ENCODE measurements at regions of chr7 and their contacts with region 1.

Region 1: GRCh38 chr7:158829342-158830210 is at the start of gene ESYT2:
- DNase-seq: peak; percentile 98 to 100 (median 100)
- H3K4me3 ChIP-seq: peak within 1 kb of the TSS; percentile 95
- H3K27ac ChIP-seq: peak within 1 kb of the TSS; percentile 97 to 98
- H3K4me1 ChIP-seq: peaks cover 6% of the 10 kb centered on the region
- H3K27me3 ChIP-seq: no peaks in the 10 kb centered on the region
- CTCF ChIP-seq: peak in 2 of 3 donors; percentile 23 to 37
- EP300 ChIP-seq: peak; percentile 54
- POLR2A ChIP-seq: peak; percentile 99
- total RNA-seq, gene ESYT2: 72.8 to 147 (median 95.9) TPM

Region 2: GRCh38 chr7:158689488-158689887 is 140.1 kb before region 1 on chr7:
- intact Hi-C with region 1: no loop called
- DNase-seq: no peak
- H3K4me3 ChIP-seq: no peak overlapping the region
- H3K27ac ChIP-seq: no peak overlapping the region
- H3K4me1 ChIP-seq: no peaks in the 10 kb centered on the region
- H3K27me3 ChIP-seq: no peaks in the 10 kb centered on the region
- CTCF ChIP-seq: no peak
- EP300 ChIP-seq: no peak
- POLR2A ChIP-seq: no peak

Region 3: GRCh38 chr7:158784270-158784669 is 45.3 kb before region 1 on chr7:
- intact Hi-C with region 1: loop called in 1 of 4 experiments (anchors 2 kb)
- DNase-seq: peak in 2 of 5 donors; percentile 35 to 51
- H3K4me3 ChIP-seq: no peak overlapping the region
- H3K27ac ChIP-seq: peak overlapping the region in 1 of 2 donors; percentile 5
- H3K4me1 ChIP-seq: peaks cover 14% of the 10 kb centered on the region
- H3K27me3 ChIP-seq: no peaks in the 10 kb centered on the region
- CTCF ChIP-seq: no peak
- EP300 ChIP-seq: no peak
- POLR2A ChIP-seq: no peak

Region 4: DNA sequence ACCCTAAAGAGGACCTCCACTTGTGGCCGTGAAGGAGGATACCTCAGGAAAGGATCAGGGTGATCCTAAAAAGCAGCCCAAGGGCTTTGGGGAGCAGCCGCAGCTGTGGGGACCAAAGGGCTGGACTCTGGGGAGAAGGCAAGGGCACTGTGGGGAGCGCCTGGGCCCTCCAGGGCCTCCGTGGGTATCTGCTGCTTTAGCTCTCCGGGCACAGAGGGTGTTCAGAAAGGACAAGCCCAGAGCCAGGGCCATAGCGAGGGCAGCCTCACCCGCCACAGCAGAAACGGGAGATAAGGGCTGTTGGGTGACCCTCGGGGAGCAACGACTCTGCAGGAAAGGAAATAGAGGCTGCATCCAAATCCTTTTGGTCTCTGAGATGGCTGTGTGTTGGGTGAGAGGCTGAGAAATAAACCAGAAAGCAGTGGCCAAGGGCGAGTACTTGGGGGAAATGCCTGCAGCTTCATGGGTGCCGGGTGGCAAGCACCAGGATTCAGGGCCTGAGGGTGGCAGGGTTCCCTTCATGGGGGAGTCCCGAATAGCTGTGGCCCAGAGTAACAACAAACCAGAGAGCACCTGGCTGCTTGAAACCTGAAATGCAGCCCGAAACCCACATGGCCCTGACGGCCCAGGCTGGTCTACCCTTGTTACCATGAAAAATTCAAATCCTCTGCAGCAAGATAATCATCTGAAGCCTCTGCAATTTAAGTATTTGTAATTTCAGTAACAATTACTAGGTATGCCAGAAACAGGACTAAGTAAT is 219.9 kb after region 1 on chr7:
- intact Hi-C with region 1: no loop called
- DNase-seq: no peak
- H3K4me3 ChIP-seq: no peak overlapping the region
- H3K27ac ChIP-seq: no peak overlapping the region
- H3K4me1 ChIP-seq: no peaks in the 10 kb centered on the region
- H3K27me3 ChIP-seq: no peaks in the 10 kb centered on the region
- CTCF ChIP-seq: no peak
- EP300 ChIP-seq: no peak
- POLR2A ChIP-seq: no peak

Measured in ovary (tissue), 10 donors.